ENCODE measurements at regions of chr16 and their contacts with region 1.

Region 1: DNA sequence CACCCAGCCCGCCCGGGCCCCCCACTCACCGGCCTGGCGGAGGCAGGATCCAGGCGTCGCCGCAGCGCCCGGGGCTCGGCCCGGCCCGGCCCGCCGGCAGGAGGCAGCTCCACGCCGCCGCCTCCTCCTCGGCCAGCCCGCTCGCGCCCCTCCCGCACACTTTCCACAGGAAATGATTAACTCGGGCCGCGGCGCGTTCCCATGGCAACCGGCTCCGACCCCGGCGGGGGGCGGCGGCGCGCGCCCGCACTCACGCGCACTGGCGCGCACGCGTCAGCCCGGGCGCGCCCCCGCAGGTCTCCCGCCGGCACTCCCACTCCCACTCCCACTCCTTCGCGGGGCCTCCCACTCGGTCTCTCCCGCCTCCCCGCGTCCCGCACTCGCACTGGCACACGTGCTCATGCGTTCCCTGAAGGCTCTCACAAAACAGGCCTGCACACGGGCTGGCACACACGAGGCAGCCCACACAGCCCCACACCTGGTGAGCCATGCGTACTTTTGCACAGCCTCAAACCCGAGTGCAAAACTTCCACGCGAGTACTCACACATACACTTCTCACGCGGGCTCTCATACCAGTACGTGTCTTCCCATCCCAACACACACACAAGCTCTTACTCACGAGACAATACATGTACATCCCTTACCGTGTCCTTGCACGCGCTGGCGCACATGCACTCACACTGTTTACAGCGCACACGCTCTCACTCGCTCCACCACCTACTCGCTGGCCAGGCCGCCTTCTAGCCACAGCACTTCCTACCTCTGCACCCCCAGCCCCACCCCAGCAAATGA is at the start of gene KIFC3:
- DNase-seq: peak; percentile 92 to 94
- H3K4me3 ChIP-seq: peak within 1 kb of the TSS; percentile 80
- H3K4me3 Mint-ChIP-seq: peak within 1 kb of the TSS; percentile 92
- H3K27ac Mint-ChIP-seq: peak within 1 kb of the TSS; percentile 95
- H3K4me1 ChIP-seq: peaks cover 78% of the 10 kb centered on the region
- H3K4me1 Mint-ChIP-seq: peaks cover 66% of the 10 kb centered on the region
- H3K27me3 ChIP-seq: no peaks in the 10 kb centered on the region
- H3K27me3 Mint-ChIP-seq: no peaks in the 10 kb centered on the region
- CTCF ChIP-seq: no peak
- total RNA-seq, gene KIFC3: 103 and 108 TPM in 2 replicates

Region 2: DNA sequence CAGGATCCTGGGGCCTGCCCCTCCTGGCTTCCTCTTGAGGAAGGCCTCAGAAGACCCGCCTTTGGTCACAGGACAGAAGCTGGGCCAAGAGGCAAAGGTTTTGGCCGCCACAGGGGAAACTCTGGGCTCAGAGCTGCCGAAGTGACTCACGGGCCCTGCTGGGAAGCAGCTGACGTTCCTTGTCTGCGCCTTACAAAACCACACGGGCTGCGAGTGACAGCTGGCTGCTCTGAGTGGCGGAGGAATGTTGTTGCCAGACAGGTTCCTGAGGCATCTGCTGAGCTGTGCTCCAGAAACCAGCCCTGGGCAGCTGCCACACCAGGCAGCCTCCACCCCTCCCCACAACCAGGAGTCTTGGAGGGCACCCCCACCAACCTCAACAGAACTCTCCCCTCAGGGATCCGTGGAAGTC is 13.8 kb after region 1 on chr16:
- CTCF ChIA-PET with region 1: interaction called, 10 read pairs
- POLR2A ChIA-PET with region 1: interaction called, 4 read pairs
- intact Hi-C with region 1: loop called (anchors 1 kb)
- DNase-seq: peak; percentile 94 to 96
- H3K4me3 ChIP-seq: no peak overlapping the region
- H3K4me3 Mint-ChIP-seq: peak overlapping the region; percentile 66
- H3K27ac Mint-ChIP-seq: peak overlapping the region; percentile 98
- H3K4me1 ChIP-seq: peaks cover 83% of the 10 kb centered on the region
- H3K4me1 Mint-ChIP-seq: peaks cover 69% of the 10 kb centered on the region
- H3K27me3 ChIP-seq: no peaks in the 10 kb centered on the region
- H3K27me3 Mint-ChIP-seq: no peaks in the 10 kb centered on the region
- CTCF ChIP-seq: no peak